CD8-positive, alpha-beta T cell (primary cell): ENCODE measurements at regions of chr9 and their contacts with region 1.

Region 1: DNA sequence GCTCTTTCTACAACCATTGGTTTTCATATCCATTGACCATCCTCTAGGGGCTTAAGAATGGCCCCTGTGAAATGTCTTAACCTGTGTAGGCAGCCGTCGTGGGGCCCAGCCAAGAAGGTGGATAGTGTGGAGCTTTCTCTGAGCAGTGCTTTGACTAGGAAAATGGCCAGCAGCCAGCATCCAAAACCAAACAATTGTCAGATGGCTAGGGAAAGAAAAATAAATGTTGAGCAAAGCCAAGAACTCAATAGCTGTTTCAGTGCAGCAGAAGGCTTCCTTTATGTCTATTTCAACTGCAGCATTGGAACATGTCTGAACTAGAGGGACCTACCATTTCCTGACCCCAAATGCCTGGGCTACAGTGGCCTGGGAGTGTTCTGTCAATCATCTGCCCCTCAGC is 374.9 kb downstream of the TLE4 start:
- DNase-seq: no peak
- ATAC-seq: no peak
- H3K4me3 ChIP-seq: no peak overlapping the region
- H3K4me3 Mint-ChIP-seq: no peak overlapping the region
- H3K27ac ChIP-seq: no peak overlapping the region
- H3K27ac Mint-ChIP-seq: no peak overlapping the region
- H3K4me1 ChIP-seq: no peaks in the 10 kb centered on the region
- H3K4me1 Mint-ChIP-seq: no peaks in the 10 kb centered on the region
- H3K27me3 ChIP-seq: no peaks in the 10 kb centered on the region
- H3K27me3 Mint-ChIP-seq: no peaks in the 10 kb centered on the region
- CTCF ChIP-seq: no peak

Region 2: DNA sequence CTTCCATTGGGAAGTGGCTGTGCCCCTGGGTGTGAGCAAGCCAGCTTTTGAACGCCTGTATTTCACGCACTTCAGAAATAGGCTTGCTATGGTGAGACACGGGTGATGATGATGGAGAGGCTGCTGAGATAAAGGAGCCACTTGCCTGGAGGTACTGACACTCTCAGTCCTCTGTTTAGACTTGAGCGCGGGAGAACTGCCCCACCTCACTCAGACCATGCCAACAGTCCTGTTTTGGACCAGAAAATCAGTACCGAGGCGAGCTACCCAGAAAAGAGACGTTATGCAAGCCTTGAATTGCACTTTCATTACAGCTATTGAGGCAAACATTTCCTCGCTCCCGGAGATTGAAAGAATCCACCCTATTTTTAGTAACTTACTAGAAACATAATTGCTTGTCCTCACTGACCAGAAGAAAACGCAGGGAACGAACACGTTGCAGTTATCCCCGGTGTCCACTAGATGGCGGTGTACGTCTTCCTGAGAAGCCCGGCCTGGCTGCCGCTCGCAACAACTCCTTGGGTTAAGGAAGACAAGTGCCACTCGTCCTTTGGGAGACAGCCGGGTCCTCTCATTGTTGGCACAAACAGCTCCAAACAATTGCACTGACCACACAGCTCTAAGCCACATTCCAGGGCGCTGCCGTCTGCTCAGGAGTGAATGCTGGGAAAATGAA is 1507.4 kb before region 1 on chr9:
- CTCF ChIA-PET with region 1: no interaction called
- POLR2A ChIA-PET with region 1: no interaction called
- intact Hi-C with region 1: loop called in 1 of 2 experiments (anchors 2 kb)
- DNase-seq: peak; percentile 20 to 75 (median 62)
- ATAC-seq: peak; percentile 46
- H3K4me3 ChIP-seq: no peak overlapping the region
- H3K4me3 Mint-ChIP-seq: no peak overlapping the region
- H3K27ac ChIP-seq: no peak overlapping the region
- H3K27ac Mint-ChIP-seq: no peak overlapping the region
- H3K4me1 ChIP-seq: no peaks in the 10 kb centered on the region
- H3K4me1 Mint-ChIP-seq: peaks cover 5% of the 10 kb centered on the region
- H3K27me3 ChIP-seq: peaks cover 0 to 4% of the 10 kb centered on the region in 2 experiments
- H3K27me3 Mint-ChIP-seq: peaks cover 33% of the 10 kb centered on the region
- CTCF ChIP-seq: peak; percentile 96

Region 3: GRCh38 chr9:78820855-78821822 is 1125.6 kb before region 1 on chr9:
- CTCF ChIA-PET with region 1: no interaction called
- POLR2A ChIA-PET with region 1: no interaction called
- intact Hi-C with region 1: loop called in 1 of 2 experiments (anchors 10 kb)
- DNase-seq: peak in 2 of 9 experiments; percentile 13 to 27
- ATAC-seq: no peak
- H3K4me3 ChIP-seq: no peak overlapping the region
- H3K4me3 Mint-ChIP-seq: peak overlapping the region; percentile 68
- H3K27ac ChIP-seq: no peak overlapping the region
- H3K27ac Mint-ChIP-seq: no peak overlapping the region
- H3K4me1 ChIP-seq: no peaks in the 10 kb centered on the region
- H3K4me1 Mint-ChIP-seq: peaks cover 4% of the 10 kb centered on the region
- H3K27me3 ChIP-seq: no peaks in the 10 kb centered on the region
- H3K27me3 Mint-ChIP-seq: no peaks in the 10 kb centered on the region
- CTCF ChIP-seq: peak; percentile 68

Region 4: GRCh38 chr9:79129865-79130480 is 816.7 kb before region 1 on chr9:
- CTCF ChIA-PET with region 1: no interaction called
- POLR2A ChIA-PET with region 1: no interaction called
- intact Hi-C with region 1: loop called in 1 of 2 experiments (anchors 1 kb)
- DNase-seq: peak in 2 of 9 experiments; percentile 8 to 13
- ATAC-seq: no peak
- H3K4me3 ChIP-seq: no peak overlapping the region
- H3K4me3 Mint-ChIP-seq: no peak overlapping the region
- H3K27ac ChIP-seq: no peak overlapping the region
- H3K27ac Mint-ChIP-seq: no peak overlapping the region
- H3K4me1 ChIP-seq: no peaks in the 10 kb centered on the region
- H3K4me1 Mint-ChIP-seq: no peaks in the 10 kb centered on the region
- H3K27me3 ChIP-seq: no peaks in the 10 kb centered on the region
- H3K27me3 Mint-ChIP-seq: no peaks in the 10 kb centered on the region
- CTCF ChIP-seq: no peak

Region 5: GRCh38 chr9:79471580-79472543 is 474.9 kb before region 1 on chr9:
- CTCF ChIA-PET with region 1: no interaction called
- POLR2A ChIA-PET with region 1: no interaction called
- intact Hi-C with region 1: loop called (anchors 2 to 5 kb)
- DNase-seq: peak in 8 of 9 experiments; percentile 14 to 57 (median 41)
- ATAC-seq: peak; percentile 54
- H3K4me3 ChIP-seq: no peak overlapping the region
- H3K4me3 Mint-ChIP-seq: no peak overlapping the region
- H3K27ac ChIP-seq: no peak overlapping the region
- H3K27ac Mint-ChIP-seq: peak overlapping the region; percentile 30
- H3K4me1 ChIP-seq: peaks cover 17% of the 10 kb centered on the region
- H3K4me1 Mint-ChIP-seq: peaks cover 23% of the 10 kb centered on the region
- H3K27me3 ChIP-seq: no peaks in the 10 kb centered on the region
- H3K27me3 Mint-ChIP-seq: no peaks in the 10 kb centered on the region
- CTCF ChIP-seq: no peak

Region 6: DNA sequence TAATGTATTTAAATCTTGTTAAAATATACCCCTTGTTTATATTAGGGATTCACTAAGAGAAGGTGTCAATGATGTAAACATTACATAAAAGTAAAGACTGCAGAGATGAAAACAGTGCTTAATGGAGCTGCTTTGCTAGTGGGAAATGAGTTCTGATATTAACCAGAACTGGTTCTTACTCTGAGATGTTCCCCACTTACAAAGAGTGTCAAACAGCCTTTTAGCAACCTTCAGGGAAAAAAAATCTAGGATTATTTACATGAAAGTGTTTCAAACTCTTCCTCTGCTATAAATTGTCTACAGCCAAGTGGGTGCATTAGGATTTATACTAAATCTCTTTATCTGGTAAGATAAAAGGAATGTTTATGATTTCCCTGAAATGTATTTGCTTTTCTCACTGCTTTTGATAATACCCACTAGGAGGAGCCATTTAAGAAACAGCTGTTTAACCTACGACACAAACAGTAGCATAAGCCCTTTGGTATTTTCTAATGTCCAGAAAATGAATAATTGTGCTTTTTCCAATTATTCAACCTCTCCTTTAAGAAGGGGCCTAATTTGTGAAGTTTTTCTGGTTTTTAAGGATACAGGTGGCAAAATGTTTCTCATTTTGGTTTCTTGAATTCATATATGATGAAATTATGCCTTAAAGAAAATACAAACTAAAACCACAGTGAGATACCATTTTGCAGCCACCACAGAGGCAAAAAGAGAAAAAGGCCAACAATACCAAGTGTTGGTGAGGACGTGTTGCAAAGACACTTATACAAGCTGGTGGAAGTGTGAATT is 188.6 kb before region 1 on chr9:
- CTCF ChIA-PET with region 1: no interaction called
- POLR2A ChIA-PET with region 1: no interaction called
- intact Hi-C with region 1: loop called in 1 of 2 experiments (anchors 10 kb)
- DNase-seq: peak in 2 of 9 experiments; percentile 3 to 14
- ATAC-seq: no peak
- H3K4me3 ChIP-seq: no peak overlapping the region
- H3K4me3 Mint-ChIP-seq: no peak overlapping the region
- H3K27ac ChIP-seq: no peak overlapping the region
- H3K27ac Mint-ChIP-seq: no peak overlapping the region
- H3K4me1 ChIP-seq: no peaks in the 10 kb centered on the region
- H3K4me1 Mint-ChIP-seq: peaks cover 2% of the 10 kb centered on the region
- H3K27me3 ChIP-seq: no peaks in the 10 kb centered on the region
- H3K27me3 Mint-ChIP-seq: no peaks in the 10 kb centered on the region
- CTCF ChIP-seq: peak; percentile 41

Region 7: GRCh38 chr9:80049096-80049782 is 102.5 kb after region 1 on chr9:
- CTCF ChIA-PET with region 1: no interaction called
- POLR2A ChIA-PET with region 1: no interaction called
- intact Hi-C with region 1: no loop called
- DNase-seq: no peak
- ATAC-seq: no peak
- H3K4me3 ChIP-seq: no peak overlapping the region
- H3K4me3 Mint-ChIP-seq: no peak overlapping the region
- H3K27ac ChIP-seq: no peak overlapping the region
- H3K27ac Mint-ChIP-seq: no peak overlapping the region
- H3K4me1 ChIP-seq: no peaks in the 10 kb centered on the region
- H3K4me1 Mint-ChIP-seq: no peaks in the 10 kb centered on the region
- H3K27me3 ChIP-seq: no peaks in the 10 kb centered on the region
- H3K27me3 Mint-ChIP-seq: peaks cover 11% of the 10 kb centered on the region
- CTCF ChIP-seq: no peak